Mammary epithelial cell (primary cell): ENCODE measurements at regions of chr15 and their contacts with region 1.

Region 1: GRCh38 chr15:78093242-78094020 is 1.1 kb downstream of the SH2D7 start:
- DNase-seq: peak; percentile 16
- H3K4me3 ChIP-seq: no peak overlapping the region
- H3K27ac ChIP-seq: no peak overlapping the region
- H3K4me1 ChIP-seq: no peaks in the 10 kb centered on the region
- H3K27me3 ChIP-seq: no peaks in the 10 kb centered on the region
- CTCF ChIP-seq: no peak

Region 2: DNA sequence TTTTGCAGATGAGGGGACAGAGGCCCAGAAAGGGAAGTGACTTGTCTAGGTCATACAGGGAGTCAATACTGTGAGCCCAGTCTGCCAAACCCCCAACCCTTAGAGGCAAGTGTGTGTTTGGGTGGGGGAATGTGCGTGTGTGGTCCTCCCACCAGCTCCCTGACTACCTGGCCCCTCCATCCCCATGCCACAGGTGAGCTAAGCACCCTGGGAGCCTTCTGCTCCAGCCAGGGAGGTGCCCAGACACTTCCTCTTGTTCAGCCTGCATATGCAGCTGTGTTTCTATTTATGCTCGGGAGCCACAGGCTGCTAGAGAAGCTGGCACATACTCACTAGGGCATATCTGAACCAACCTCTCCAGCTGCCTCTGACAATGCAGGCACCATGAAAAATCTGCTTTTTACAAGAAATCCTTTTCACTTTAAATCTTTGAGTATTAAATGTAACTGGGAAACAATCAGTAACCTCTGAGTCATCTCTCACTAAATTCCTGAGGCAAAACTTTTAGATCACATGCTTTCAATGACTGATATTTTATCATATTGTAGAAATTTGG is 36.6 kb before region 1 on chr15:
- CTCF ChIA-PET with region 1: no interaction called
- dilution Hi-C with region 1: loop called (anchors 5 kb)
- in situ Hi-C with region 1: no loop called
- intact Hi-C with region 1: no loop called
- DNase-seq: peak; percentile 51
- H3K4me3 ChIP-seq: no peak overlapping the region
- H3K27ac ChIP-seq: peak overlapping the region; percentile 53
- H3K4me1 ChIP-seq: peaks cover 21% of the 10 kb centered on the region
- H3K27me3 ChIP-seq: no peaks in the 10 kb centered on the region
- CTCF ChIP-seq: no peak

Region 3: DNA sequence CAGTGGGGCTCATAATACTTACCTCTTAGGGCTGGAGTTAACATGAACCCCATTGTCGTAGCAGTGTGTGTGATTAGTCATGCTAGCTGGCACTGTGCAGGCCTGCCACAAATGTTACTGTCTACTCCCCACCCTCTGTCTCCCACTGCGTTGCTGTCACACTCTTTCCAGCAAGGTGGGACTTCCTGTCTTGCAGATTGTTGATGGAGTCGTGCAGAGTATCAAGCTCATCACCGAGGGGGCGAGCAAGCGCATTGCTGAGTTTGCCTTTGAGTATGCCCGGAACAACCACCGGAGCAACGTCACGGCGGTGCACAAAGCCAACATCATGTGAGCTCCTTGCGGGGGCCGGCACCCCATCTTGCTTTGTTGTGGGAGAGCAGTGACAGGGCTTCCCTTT is 68.6 kb after region 1 on chr15:
- CTCF ChIA-PET with region 1: no interaction called
- dilution Hi-C with region 1: loop called (anchors 5 kb)
- in situ Hi-C with region 1: no loop called
- intact Hi-C with region 1: no loop called
- DNase-seq: no peak
- H3K4me3 ChIP-seq: no peak overlapping the region
- H3K27ac ChIP-seq: no peak overlapping the region
- H3K4me1 ChIP-seq: peaks cover 1% of the 10 kb centered on the region
- H3K27me3 ChIP-seq: no peaks in the 10 kb centered on the region
- CTCF ChIP-seq: no peak